PC-9 (cell line): ENCODE measurements at regions of chr9 and their contacts with region 1.

Region 1: DNA sequence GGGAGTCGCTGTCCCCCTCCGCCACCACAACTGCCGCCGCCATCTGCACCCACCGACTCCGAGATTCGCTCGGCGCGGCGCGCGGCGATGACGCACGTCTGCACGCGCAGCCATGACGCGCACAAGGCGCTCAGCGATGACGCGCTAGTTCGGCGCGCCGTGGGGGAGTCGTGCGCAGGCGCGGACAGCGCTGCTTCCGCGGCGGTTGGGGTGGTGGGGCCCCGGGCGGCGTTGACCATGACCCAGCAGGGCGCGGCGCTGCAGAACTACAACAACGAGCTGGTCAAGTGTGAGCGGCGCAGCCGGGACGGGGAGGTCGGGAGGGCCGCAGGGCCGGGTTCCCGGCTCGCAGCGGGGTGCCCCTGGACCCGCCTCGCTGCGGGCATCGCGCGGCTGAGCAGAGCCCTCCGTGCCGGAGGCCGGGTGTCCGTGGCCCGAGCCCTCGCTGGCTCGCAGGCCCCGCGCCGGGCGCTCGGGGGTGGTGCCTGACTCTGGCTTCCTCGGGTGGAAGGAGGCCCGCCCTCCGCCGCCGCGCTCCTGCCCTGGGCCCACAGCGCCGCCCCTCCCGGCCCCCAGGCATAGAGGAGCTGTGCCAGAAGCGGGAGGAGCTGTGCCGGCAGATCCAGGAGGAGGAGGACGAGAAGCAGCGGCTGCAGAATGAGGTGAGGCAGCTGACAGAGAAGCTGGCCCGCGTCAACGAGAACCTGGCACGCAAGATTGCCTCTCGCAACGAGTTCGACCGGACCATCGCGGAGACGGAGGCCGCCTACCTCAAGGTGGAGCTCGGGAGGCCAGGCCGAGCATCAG is at the starts of genes ANAPC2 and SSNA1:
- DNase-seq: peak; percentile 81 to 98
- H3K4me3 ChIP-seq: peak within 1 kb of the TSS; percentile 97
- H3K27ac ChIP-seq: peak within 1 kb of the TSS; percentile 74
- H3K4me1 ChIP-seq: peaks cover 33% of the 10 kb centered on the region
- H3K27me3 ChIP-seq: no peaks in the 10 kb centered on the region
- CTCF ChIP-seq: peak; percentile 44; the same call in 1 of the 2 replicates
- total RNA-seq, gene ANAPC2: 92.1 and 95.4 TPM in 2 replicates
- total RNA-seq, gene SSNA1: 98.7 and 109 TPM in 2 replicates

Region 2: DNA sequence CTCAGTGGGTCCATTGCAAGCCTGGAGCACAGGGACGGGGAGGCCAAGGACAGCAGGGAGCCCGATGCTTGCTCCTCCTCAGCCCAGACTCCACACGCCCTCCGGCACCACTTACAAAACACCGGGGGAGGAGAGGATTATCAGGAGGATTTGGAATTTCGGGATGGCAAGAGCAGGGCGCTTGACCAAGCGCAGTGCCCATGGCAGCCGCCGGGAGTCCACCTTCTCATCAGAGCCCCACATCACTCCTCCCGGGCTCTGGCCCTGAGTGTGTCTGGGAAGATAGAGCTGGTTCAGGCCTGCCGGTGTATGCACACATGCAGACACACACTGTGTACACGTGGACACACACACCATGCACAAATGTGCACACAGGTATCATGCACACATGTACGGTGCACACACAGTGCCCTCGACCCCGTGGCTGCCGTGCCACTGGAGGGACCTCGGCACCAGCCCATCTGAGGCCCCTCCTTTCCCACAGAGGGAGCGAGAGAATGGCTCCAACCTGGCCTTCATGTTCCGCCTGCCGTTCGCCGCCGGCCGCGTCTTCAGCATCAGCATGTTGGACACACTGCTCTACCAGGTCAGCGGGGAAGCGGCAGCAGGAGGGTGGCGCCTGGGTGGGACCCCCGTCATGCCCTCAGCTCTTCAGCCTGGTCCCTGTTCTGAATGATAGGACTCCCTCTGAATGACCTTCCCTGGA is 1405.0 kb before region 1 on chr9:
- CTCF ChIA-PET with region 1: no interaction called
- POLR2A ChIA-PET with region 1: no interaction called
- intact Hi-C with region 1: no loop called
- DNase-seq: no peak
- H3K4me3 ChIP-seq: no peak overlapping the region
- H3K27ac ChIP-seq: no peak overlapping the region
- H3K4me1 ChIP-seq: no peaks in the 10 kb centered on the region
- H3K27me3 ChIP-seq: no peaks in the 10 kb centered on the region
- CTCF ChIP-seq: no peak

Region 3: GRCh38 chr9:137129456-137130175 is 59.1 kb before region 1 on chr9:
- CTCF ChIA-PET with region 1: interaction called, 17 read pairs
- POLR2A ChIA-PET with region 1: interaction called, 4 read pairs
- intact Hi-C with region 1: loop called (anchors 2 kb)
- DNase-seq: peak; percentile 76 to 93
- H3K4me3 ChIP-seq: peak overlapping the region; percentile 86
- H3K27ac ChIP-seq: peak overlapping the region; percentile 54
- H3K4me1 ChIP-seq: peaks cover 28% of the 10 kb centered on the region
- H3K27me3 ChIP-seq: no peaks in the 10 kb centered on the region
- CTCF ChIP-seq: no peak

Region 4: DNA sequence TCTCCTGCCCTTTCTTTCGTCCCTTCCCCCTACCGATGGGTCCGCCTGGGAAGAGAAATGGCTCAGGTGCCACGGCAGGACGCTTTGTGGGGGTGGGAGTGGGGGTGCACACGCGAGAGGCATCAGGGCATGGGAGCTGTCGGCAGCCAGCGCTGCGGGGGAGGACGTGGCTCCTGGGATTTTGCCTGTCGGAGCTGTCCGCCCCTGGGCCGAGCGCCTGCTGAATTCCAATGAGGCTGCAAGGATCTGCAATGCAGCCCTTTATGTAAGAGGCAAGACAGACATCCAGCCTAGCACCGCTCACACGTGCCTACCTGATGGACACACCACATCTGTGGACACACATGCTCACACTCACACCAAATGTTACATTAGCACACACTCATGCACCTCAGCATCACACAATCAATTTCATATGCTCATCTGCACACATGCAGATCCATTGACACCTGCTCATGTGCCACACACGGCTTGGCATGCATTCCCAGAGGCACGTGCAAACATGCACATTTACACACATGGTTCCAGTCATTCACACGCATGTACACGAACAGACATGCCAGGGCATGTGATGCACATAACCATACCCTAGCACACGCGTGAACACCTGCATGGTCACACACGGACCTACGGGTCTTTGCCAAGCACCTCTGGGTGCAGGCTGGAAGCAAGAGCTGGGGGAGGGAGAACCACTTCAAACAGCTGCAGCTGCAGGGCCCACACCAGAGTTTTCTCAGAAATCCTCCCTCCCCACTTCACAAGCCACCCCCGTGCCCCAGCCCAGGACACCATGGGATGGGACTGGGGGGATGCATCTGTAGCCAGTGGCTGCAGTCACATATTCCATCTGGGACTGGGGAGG is 48.3 kb before region 1 on chr9:
- CTCF ChIA-PET with region 1: no interaction called
- POLR2A ChIA-PET with region 1: no interaction called
- intact Hi-C with region 1: no loop called
- DNase-seq: no peak
- H3K4me3 ChIP-seq: no peak overlapping the region
- H3K27ac ChIP-seq: no peak overlapping the region
- H3K4me1 ChIP-seq: no peaks in the 10 kb centered on the region
- H3K27me3 ChIP-seq: peaks cover 26% of the 10 kb centered on the region; the same call in 1 of the 2 replicates
- CTCF ChIP-seq: no peak

Region 5: DNA sequence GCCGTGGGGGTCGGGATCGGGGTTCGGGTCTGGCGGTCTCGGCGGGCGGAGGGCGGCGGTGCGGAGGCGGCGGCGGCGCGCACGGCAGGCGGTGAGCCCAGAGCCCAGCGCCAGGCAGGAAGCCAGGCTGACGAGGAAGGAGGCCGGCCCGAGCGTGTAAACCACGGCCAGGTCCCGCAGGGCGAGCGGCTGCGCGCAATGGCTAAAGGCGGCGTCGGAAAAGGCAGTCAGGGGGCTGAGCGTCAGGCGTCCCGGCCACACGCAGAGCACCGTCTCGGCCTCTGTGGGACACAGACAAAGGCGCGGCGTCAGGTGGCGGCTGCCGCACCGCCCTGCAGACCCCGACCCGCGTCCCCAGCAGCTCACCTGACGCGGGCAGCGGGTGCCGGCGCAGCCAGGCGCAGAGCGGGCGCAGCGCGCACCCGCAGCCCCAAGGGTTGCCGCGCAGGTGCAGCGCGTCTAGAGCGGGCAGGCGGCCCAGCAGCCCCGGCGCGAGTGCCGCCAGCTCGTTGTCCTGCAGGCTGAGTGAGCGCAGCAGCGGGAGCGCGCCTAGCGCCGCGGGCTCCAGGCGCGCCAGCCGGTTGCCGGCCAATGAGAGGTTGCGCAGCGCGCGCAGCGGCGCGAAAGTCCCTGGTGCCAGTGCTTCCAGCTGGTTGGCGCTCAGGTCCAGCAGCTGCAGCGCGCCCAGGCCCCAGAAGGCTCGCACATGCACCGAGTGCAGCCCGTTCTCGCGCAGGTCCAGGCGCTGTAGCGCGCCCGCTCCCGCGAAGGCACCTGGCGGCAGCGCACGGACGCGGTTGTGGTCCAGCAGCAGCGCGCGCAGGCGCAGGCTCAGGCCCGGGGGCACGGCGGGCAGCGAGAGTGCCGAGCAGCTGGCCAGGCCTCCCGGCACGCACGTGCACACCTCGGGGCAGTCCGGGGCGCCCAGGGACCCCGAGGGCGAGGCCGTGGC is 19.5 kb before region 1 on chr9:
- CTCF ChIA-PET with region 1: no interaction called
- POLR2A ChIA-PET with region 1: no interaction called
- intact Hi-C with region 1: loop called (anchors 2 kb)
- DNase-seq: peak; percentile 66 to 80
- H3K4me3 ChIP-seq: peak overlapping the region; percentile 75
- H3K27ac ChIP-seq: no peak overlapping the region
- H3K4me1 ChIP-seq: peaks cover 13% of the 10 kb centered on the region; the same call in 1 of the 2 replicates
- H3K27me3 ChIP-seq: no peaks in the 10 kb centered on the region
- CTCF ChIP-seq: no peak

Region 6: GRCh38 chr9:137217276-137218211 is 28.9 kb after region 1 on chr9:
- CTCF ChIA-PET with region 1: interaction called, 3 read pairs
- POLR2A ChIA-PET with region 1: interaction called, 4 read pairs
- intact Hi-C with region 1: loop called (anchors 1 kb)
- DNase-seq: peak; percentile 72 to 97
- H3K4me3 ChIP-seq: peak overlapping the region; percentile 26; the same call in 1 of the 2 replicates
- H3K27ac ChIP-seq: no peak overlapping the region
- H3K4me1 ChIP-seq: peaks cover 26% of the 10 kb centered on the region
- H3K27me3 ChIP-seq: no peaks in the 10 kb centered on the region
- CTCF ChIP-seq: no peak